ENCODE measurements at regions of chr18 and their contacts with region 1.

Region 1: GRCh38 chr18:54558609-54559585 is 32.1 kb upstream of the DYNAP start:
- DNase-seq: peak; percentile 2
- H3K4me3 ChIP-seq: no peak overlapping the region
- CTCF ChIP-seq: peak; percentile 67

Region 2: DNA sequence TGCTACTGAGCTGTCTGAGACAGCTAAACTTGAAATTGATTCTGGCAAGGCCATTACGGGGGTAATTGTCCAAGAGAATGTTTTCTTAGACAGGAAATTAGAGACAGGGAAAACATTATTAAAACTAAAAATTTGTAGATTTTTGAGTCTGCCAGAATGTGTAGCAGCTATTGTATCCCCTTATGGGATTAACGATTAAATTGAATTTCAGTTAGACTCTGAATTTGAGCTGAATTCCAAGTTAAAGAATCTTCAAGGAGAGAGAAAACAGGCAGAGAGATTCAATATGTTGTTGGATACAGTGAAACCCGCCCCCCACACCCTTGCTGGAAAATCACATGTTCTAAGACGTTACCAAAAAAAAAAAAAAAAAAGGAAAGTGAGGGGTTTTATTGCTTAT is 433.1 kb after region 1 on chr18:
- in situ Hi-C with region 1: loop called (anchors 10 kb)
- DNase-seq: no peak
- H3K4me3 ChIP-seq: no peak overlapping the region
- CTCF ChIP-seq: no peak